ENCODE measurements at regions of chr3 and their contacts with region 1.

Region 1: DNA sequence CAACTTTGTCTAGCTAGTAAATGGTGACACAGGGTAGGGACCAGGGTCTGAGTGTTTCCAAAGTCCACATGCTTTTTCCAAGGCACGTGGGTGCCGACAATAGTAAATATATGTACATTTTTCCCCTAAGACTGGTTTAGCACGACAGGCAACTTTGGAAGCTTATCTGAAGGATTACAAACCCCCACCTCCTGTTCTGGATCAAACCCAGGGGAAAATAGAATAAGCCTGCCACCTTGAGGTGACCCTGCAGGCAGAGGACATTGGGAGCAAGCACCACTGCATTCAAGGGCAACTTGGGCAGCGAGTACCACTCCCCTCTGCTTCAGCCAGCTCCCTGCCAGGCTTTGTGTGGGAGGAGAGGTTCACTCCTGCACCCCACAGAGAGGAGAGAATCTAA is 44.8 kb downstream of the KBTBD12 start:
- DNase-seq: no peak
- ATAC-seq: peak; percentile 53

Region 2: GRCh38 chr3:126442094-126442855 is 1517.6 kb before region 1 on chr3:
- intact Hi-C with region 1: loop called (anchors 10 kb)
- DNase-seq: peak; percentile 60
- ATAC-seq: no peak

Region 3: GRCh38 chr3:127652231-127652995 is 307.4 kb before region 1 on chr3:
- intact Hi-C with region 1: loop called (anchors 10 kb)
- DNase-seq: peak; percentile 78
- ATAC-seq: peak; percentile 90

Region 4: GRCh38 chr3:128153156-128154041 is 193.6 kb after region 1 on chr3 and contains the start of gene EEFSEC:
- intact Hi-C with region 1: no loop called
- DNase-seq: peak; percentile 89
- ATAC-seq: peak; percentile 96
- total RNA-seq, gene EEFSEC: 14.8 TPM

Region 5: GRCh38 chr3:128497387-128498126 is 537.7 kb after region 1 on chr3:
- intact Hi-C with region 1: no loop called
- DNase-seq: no peak
- ATAC-seq: peak; percentile 80